BJ (cell line): ENCODE measurements at regions of chr14 and their contacts with region 1.

Region 1: GRCh38 chr14:103391048-103391447 is 5.8 kb downstream of the MARK3 start:
- DNase-seq: peak; percentile 54
- H3K4me3 ChIP-seq: no peak overlapping the region
- H3K27me3 ChIP-seq: no peaks in the 10 kb centered on the region
- CTCF ChIP-seq: peak; percentile 76

Region 2: GRCh38 chr14:103333754-103334643 is 57.0 kb before region 1 on chr14 and contains the start of gene EIF5:
- CTCF ChIA-PET with region 1: interaction called, 52 read pairs
- POLR2A ChIA-PET with region 1: no interaction called
- DNase-seq: peak; percentile 85
- H3K4me3 ChIP-seq: peak within 1 kb of the TSS; percentile 84
- H3K27me3 ChIP-seq: no peaks in the 10 kb centered on the region
- CTCF ChIP-seq: peak; percentile 28; the same call in 1 of the 2 replicates
- polyA plus RNA-seq, gene EIF5: 282 and 340 TPM in 2 replicates

Region 3: DNA sequence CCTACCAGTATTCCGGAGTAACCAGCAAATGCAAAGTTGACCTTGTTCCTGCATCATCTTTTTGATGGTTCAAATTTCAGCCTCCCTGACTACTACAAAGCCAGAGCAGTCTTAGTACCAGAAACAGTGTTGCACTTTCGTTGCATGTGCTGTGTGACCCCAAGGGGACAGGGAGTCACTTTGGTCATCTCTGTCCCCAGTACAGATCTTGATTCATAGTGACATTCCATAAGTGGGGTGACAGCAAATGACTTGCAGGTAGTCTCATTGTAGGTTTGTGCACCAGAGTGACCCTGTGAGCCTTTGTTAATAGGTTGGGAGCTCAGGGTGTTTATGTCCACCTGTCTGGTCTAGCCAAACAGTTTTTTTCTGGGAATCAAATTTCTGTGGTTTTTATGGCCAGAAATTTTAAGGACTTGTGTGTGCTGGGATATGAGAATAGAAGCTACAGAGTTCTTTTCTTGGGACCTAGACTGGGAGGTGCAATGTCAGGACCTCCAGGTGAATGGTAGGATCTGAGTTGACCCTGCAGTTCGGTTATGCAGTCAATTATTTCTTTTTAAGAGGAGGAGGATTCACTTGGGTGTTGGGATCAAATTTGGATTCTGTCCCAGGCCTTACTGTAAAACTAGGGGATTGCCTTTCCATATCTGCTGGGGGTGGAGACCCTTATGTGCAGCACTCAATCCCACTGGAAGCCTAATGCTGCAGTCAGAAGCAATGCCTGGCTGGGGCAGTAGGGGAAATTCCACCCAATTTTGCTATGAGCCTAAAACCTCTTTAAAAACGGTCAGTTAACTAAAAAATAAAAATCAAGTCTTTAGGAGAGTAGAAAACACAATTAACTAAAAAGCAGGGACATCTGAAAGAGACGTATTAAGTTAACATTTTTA is 46.9 kb before region 1 on chr14:
- CTCF ChIA-PET with region 1: interaction called, 39 read pairs
- POLR2A ChIA-PET with region 1: no interaction called
- DNase-seq: no peak
- H3K4me3 ChIP-seq: no peak overlapping the region
- H3K27me3 ChIP-seq: no peaks in the 10 kb centered on the region
- CTCF ChIP-seq: no peak

Region 4: DNA sequence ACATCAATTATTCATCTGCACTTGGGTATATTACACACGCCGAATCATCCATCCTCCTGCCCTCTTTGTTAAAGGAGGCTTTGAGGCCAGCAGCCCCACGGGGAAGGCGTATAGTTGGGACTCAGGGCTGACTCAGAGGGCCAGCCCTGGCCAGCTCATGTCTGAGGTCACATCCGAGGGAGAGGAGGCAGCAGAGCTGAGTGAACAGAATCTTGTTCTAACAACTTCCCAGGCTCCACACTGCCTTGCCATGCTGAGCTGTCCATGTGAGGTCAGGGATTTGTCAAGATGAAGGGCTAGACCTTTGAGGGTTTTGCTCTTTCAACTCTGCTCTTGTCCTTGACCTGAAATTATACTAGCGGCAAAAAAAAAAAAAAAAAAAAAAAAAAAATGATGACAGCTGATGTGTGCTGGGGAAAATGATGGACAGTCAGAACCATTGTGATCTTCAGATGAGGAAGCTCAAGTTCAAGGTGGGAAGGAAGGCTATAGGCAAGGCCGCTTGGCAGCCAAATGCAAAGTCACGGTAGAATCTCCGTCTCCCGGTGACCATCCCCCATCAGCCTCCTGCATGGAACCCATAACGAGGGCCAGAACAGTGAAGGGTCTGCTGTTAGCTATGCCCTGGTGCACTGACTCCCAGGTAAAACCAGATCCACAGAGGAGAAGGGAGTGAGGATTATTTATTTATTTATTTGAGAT is 18.3 kb before region 1 on chr14:
- CTCF ChIA-PET with region 1: interaction called, 37 read pairs
- POLR2A ChIA-PET with region 1: interaction called, 4 read pairs
- DNase-seq: peak; percentile 71
- H3K4me3 ChIP-seq: no peak overlapping the region
- H3K27me3 ChIP-seq: no peaks in the 10 kb centered on the region
- CTCF ChIP-seq: no peak

Region 5: GRCh38 chr14:103401223-103402214 is 10.5 kb after region 1 on chr14:
- CTCF ChIA-PET with region 1: interaction called, 20 read pairs
- POLR2A ChIA-PET with region 1: no interaction called
- DNase-seq: peak; percentile 68
- H3K4me3 ChIP-seq: no peak overlapping the region
- H3K27me3 ChIP-seq: no peaks in the 10 kb centered on the region
- CTCF ChIP-seq: no peak

Region 6: GRCh38 chr14:103436533-103436932 is 45.5 kb after region 1 on chr14:
- CTCF ChIA-PET with region 1: interaction called, 6 read pairs
- POLR2A ChIA-PET with region 1: interaction called, 11 read pairs
- DNase-seq: no peak
- H3K4me3 ChIP-seq: no peak overlapping the region
- H3K27me3 ChIP-seq: no peaks in the 10 kb centered on the region
- CTCF ChIP-seq: no peak

Region 7: DNA sequence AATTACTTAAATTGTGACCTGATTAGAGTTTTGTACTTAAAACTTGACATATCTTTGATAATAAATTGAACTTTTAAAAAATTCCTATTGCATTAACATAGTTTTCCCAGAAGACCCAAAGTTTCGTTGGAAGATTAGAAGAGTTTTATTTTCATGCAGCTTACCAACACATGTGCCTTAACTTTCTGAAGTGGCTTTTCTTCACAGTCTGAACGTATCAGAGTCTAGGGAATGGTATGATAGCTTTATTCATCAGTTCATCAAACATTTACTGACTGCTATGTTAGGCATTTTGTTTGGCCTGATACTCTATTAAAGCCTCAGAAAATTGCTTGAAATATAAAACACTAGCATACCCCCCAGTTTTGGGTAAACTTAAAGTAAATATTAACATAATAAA is 59.4 kb after region 1 on chr14:
- CTCF ChIA-PET with region 1: interaction called, 13 read pairs
- POLR2A ChIA-PET with region 1: no interaction called
- DNase-seq: no peak
- H3K4me3 ChIP-seq: no peak overlapping the region
- H3K27me3 ChIP-seq: no peaks in the 10 kb centered on the region
- CTCF ChIP-seq: no peak

Region 8: DNA sequence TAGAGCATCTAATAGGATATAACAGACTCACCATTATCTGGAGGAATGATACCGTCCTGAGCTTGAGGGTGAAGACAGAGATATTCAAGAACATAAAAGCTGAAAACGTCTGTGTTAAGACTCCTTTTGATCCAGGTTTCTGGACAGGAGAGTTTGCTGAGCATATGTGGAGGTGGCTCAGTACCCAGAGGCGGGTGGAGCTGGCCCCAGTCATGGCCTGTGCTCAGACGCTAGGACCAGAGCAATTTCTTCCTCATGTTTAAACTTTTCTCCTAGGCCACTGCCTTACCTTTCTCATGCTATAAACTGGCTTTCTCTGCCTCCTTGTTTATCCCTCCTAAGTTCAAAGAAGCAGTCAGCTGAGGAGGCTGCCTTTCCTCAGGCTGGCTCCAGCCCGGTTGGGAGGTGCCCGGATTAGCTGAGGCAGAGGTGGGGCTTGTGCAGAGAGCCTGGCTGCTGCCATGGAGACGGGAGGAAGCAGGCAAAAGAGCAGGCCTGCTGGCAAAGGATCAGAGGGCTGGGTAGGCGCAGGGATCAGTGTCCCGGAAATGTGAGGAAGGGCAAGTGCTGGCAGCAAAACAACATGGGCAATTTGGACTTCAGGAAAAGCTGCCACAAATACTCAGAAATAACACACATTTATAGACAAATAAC is 185.4 kb after region 1 on chr14:
- CTCF ChIA-PET with region 1: no interaction called
- POLR2A ChIA-PET with region 1: no interaction called
- DNase-seq: peak; percentile 73
- H3K4me3 ChIP-seq: no peak overlapping the region
- H3K27me3 ChIP-seq: no peaks in the 10 kb centered on the region
- CTCF ChIP-seq: no peak